PC-3 (cell line): ENCODE measurements at regions of chr16 and their contacts with region 1.

Region 1: GRCh38 chr16:77171745-77172635 is 19.0 kb upstream of the MON1B start:
- DNase-seq: peak; percentile 76
- ATAC-seq: peak; percentile 58
- H3K4me3 ChIP-seq: no peak overlapping the region
- H3K27ac ChIP-seq: no peak overlapping the region
- H3K4me1 ChIP-seq: no peaks in the 10 kb centered on the region
- H3K27me3 ChIP-seq: peaks cover 10% of the 10 kb centered on the region
- CTCF ChIP-seq: peak; percentile 71

Region 2: DNA sequence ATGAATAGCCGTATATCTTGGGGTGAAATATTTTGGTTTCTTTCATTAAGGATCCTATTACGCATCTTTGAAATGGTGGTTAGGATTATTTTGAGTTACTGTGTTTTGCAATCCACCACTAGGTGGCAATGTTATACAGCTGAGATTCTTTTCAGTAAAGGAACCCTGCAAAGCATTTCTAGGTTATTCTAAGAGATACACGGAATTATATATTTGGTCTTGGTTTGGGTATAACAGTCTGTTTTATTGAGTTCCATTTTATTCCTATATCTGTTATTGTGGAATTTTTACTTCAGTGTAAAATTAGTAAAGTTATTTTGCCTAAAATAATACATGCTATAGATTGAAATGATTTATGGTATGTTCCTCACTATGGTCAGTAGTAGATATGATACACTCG is 1382.8 kb before region 1 on chr16:
- CTCF ChIA-PET with region 1: no interaction called
- POLR2A ChIA-PET with region 1: no interaction called
- intact Hi-C with region 1: loop called (anchors 1 kb)
- DNase-seq: peak; percentile 67
- ATAC-seq: peak; percentile 50; the same call in 1 of the 2 replicates
- H3K4me3 ChIP-seq: no peak overlapping the region
- H3K27ac ChIP-seq: no peak overlapping the region
- H3K4me1 ChIP-seq: no peaks in the 10 kb centered on the region
- H3K27me3 ChIP-seq: 0 out of 2 replicates have a peak, but pooled peaks cover 5% of the 10 kb centered on the region
- CTCF ChIP-seq: peak; percentile 84

Region 3: DNA sequence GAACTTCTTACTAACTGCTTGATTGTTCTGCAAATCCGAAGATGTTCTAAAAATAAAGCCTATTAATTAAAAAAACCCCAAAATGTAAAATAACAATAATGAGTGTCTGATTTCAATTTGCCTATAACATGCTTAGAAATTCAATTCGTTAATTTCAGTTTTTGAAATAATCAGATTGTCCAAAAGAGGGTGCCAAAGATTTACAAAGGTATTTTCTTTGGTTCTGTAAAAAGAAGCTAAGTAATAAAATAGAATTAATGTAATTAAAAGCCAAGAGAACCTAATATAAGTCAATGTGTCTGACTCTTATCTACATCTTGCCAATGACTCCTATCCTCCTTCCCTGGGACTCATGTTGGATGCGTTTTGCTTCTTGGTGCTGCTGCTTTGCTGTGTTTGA is 1370.7 kb before region 1 on chr16:
- CTCF ChIA-PET with region 1: interaction called, 8 read pairs
- POLR2A ChIA-PET with region 1: no interaction called
- intact Hi-C with region 1: loop called (anchors 5 kb)
- DNase-seq: peak; percentile 37
- ATAC-seq: no peak
- H3K4me3 ChIP-seq: no peak overlapping the region
- H3K27ac ChIP-seq: no peak overlapping the region
- H3K4me1 ChIP-seq: no peaks in the 10 kb centered on the region
- H3K27me3 ChIP-seq: peaks cover 18% of the 10 kb centered on the region
- CTCF ChIP-seq: peak; percentile 52

Region 4: DNA sequence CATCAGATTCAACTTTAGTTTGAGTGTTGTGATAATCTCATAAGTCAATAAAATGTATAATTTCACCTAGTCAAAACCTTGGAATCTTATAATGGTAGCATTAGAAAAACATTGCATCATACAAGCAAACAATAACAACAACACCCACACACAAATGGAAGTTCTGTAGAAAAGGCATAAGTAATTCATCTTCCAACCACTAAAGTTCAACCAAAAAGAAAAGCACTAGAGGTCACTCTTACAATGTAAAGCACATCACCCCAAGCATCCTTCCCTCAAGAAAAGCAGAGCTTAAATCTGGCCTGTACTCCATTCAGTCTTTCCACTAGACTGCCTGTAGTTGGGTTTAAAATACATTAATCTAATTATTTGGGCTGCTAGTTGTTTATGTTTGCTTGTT is 893.0 kb before region 1 on chr16:
- CTCF ChIA-PET with region 1: no interaction called
- POLR2A ChIA-PET with region 1: no interaction called
- intact Hi-C with region 1: loop called (anchors 10 kb)
- DNase-seq: peak; percentile 20
- ATAC-seq: no peak
- H3K4me3 ChIP-seq: no peak overlapping the region
- H3K27ac ChIP-seq: no peak overlapping the region
- H3K4me1 ChIP-seq: no peaks in the 10 kb centered on the region
- H3K27me3 ChIP-seq: peaks cover 18% of the 10 kb centered on the region
- CTCF ChIP-seq: peak; percentile 49

Region 5: DNA sequence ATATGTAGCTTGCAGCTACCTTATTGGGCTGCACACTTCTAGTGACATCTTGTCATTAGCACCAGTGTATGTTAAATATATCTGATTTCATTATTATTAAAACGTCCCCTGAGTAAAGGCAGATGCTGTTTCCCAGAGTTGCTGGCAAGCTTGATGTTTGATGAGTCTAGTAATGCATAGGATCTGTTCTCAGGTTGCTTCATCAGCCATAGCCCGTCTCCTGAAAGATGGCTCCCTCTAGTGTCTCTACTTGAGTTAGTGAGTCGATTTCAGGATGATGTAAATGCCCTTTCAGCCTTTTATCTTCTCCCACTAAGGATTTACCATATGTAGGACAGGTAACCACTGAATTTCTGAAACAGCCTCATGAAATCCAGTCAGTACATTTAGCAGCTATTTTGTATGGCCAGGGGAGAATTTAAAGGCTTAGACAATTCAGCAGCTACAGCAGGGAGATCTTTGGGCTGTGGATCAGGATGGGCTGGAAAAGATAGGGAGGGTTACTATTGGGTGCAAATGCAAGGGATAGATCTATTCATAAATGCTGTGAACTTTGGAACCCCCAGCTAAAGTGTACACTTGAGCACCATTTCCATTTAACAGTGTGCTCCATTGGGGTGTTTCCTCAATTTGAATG is 518.5 kb before region 1 on chr16:
- CTCF ChIA-PET with region 1: no interaction called
- POLR2A ChIA-PET with region 1: no interaction called
- intact Hi-C with region 1: loop called (anchors 10 kb)
- DNase-seq: peak; percentile 68
- ATAC-seq: peak; percentile 73
- H3K4me3 ChIP-seq: no peak overlapping the region
- H3K27ac ChIP-seq: no peak overlapping the region
- H3K4me1 ChIP-seq: peaks cover 12% of the 10 kb centered on the region
- H3K27me3 ChIP-seq: no peaks in the 10 kb centered on the region
- CTCF ChIP-seq: peak; percentile 75

Region 6: GRCh38 chr16:76831592-76831991 is 340.4 kb before region 1 on chr16:
- CTCF ChIA-PET with region 1: no interaction called
- POLR2A ChIA-PET with region 1: no interaction called
- intact Hi-C with region 1: no loop called
- DNase-seq: no peak
- ATAC-seq: no peak
- H3K4me3 ChIP-seq: no peak overlapping the region
- H3K27ac ChIP-seq: no peak overlapping the region
- H3K4me1 ChIP-seq: no peaks in the 10 kb centered on the region
- H3K27me3 ChIP-seq: peaks cover 13% of the 10 kb centered on the region; the same call in 1 of the 2 replicates
- CTCF ChIP-seq: no peak

Region 7: DNA sequence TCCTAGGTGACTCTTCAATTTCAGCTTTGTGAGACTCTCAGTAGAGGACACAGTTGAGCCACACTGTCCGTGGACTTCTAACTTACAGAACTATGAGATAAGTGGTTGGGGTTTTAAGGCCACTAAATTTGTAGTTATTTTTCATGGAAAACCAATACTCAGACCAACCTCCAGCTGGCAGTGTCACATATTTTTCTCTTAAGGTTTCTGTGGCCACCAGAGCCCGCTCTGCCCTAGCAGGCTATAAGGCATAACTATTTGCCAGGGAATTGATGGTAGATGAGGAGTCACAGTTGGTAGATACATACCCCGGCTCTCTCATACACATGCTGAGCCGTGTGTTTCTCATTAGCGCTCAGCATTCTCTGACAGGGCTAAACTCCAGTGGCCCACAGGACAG is 317.8 kb before region 1 on chr16:
- CTCF ChIA-PET with region 1: no interaction called
- POLR2A ChIA-PET with region 1: no interaction called
- intact Hi-C with region 1: loop called (anchors 1 kb)
- DNase-seq: peak; percentile 29
- ATAC-seq: peak; percentile 48
- H3K4me3 ChIP-seq: no peak overlapping the region
- H3K27ac ChIP-seq: no peak overlapping the region
- H3K4me1 ChIP-seq: no peaks in the 10 kb centered on the region
- H3K27me3 ChIP-seq: peaks cover 20% of the 10 kb centered on the region
- CTCF ChIP-seq: peak; percentile 52; the same call in 1 of the 2 replicates

Region 8: DNA sequence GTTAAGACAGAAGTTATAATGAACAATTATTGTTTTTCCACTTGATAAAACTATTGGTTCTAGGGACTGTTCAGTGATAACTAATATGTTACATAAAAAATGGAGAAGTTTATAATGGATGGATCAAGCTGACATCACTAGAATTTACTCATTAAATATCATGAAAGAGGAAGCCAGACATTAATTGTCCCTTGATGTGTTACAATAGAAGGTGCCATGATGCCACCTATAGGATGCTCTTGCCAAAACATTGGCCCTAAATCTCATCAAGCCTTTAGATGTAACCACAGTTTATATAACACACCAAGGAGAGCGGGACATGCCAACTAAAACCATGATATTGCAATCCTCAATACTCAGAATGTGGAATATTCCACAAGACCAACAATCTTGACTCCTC is 128.9 kb before region 1 on chr16:
- CTCF ChIA-PET with region 1: no interaction called
- POLR2A ChIA-PET with region 1: no interaction called
- intact Hi-C with region 1: loop called (anchors 10 kb)
- DNase-seq: peak; percentile 43
- ATAC-seq: peak; percentile 31; the same call in 1 of the 2 replicates
- H3K4me3 ChIP-seq: no peak overlapping the region
- H3K27ac ChIP-seq: no peak overlapping the region
- H3K4me1 ChIP-seq: no peaks in the 10 kb centered on the region
- H3K27me3 ChIP-seq: peaks cover 34% of the 10 kb centered on the region
- CTCF ChIP-seq: peak; percentile 61

Region 9: GRCh38 chr16:77359065-77359502 is 187.1 kb after region 1 on chr16:
- CTCF ChIA-PET with region 1: no interaction called
- POLR2A ChIA-PET with region 1: no interaction called
- intact Hi-C with region 1: no loop called
- DNase-seq: peak; percentile 75
- ATAC-seq: peak; percentile 48
- H3K4me3 ChIP-seq: no peak overlapping the region
- H3K27ac ChIP-seq: no peak overlapping the region
- H3K4me1 ChIP-seq: peaks cover 11% of the 10 kb centered on the region
- H3K27me3 ChIP-seq: no peaks in the 10 kb centered on the region; the same call in 1 of the 2 replicates
- CTCF ChIP-seq: no peak